ENCODE measurements at regions of chr10 and their contacts with region 1.

Region 1: DNA sequence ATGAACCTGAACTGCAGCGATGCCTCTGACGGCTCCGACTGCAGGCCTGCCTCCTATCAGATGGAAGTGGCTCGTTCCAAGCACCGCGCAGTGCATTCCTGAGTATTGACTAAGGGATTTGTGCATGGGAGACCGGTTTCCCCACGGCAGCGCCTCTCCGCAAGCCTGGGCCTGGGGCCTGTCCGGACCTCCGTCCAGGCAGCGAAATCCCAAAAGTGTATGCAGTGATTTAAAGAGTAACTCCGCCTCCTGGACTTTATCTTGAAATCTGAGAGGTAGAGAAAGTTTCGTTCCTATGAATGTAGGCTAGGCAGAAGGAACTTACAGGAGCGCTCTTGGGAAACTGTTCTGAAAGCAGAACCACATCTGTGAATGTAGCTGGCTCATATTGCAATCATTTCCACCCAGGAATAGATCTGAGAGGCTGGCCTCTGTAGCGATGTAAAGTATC is 106.2 kb upstream of the CELF2 start:
- DNase-seq: peak; percentile 82 to 88
- ATAC-seq: peak; percentile 86 to 91 (median 88)
- H3K4me3 ChIP-seq: peak overlapping the region; percentile 59
- H3K27ac ChIP-seq: peak overlapping the region; percentile 92
- H3K4me1 ChIP-seq: peaks cover 30% of the 10 kb centered on the region
- H3K27me3 ChIP-seq: no peaks in the 10 kb centered on the region
- CTCF ChIP-seq: no peak

Region 2: DNA sequence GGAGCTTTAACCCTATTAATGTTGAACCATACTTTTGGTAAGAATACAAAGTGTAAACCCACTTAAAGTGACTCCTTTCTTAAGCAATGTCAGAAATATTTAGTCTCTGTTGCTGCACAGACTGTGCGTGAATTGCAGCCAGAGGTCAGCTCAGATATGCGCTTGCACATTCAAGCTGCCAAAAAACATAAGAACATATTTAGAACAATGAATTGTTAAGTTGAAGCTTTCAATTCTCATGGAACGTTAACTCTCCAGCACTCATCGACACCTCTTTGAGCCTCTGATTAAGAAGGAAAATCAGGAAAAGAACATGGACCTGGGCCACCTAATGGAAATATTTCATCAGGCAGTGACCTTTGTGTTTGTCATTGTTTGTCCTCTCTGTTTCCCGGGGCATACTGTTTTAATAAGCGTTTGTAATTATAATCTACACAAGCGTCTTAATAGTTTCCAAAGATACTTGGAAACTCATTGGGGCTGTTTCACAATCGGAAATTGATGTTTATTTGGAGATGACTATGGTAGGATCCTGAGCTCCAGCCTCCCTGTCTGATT is 86.8 kb before region 1 on chr10:
- intact Hi-C with region 1: no loop called
- DNase-seq: peak; percentile 24 to 51
- ATAC-seq: peak in 3 of 4 donors; percentile 30 to 67 (median 65)
- H3K4me3 ChIP-seq: no peak overlapping the region
- H3K27ac ChIP-seq: peak overlapping the region; percentile 44
- H3K4me1 ChIP-seq: no peaks in the 10 kb centered on the region
- H3K27me3 ChIP-seq: no peaks in the 10 kb centered on the region
- CTCF ChIP-seq: no peak

Region 3: DNA sequence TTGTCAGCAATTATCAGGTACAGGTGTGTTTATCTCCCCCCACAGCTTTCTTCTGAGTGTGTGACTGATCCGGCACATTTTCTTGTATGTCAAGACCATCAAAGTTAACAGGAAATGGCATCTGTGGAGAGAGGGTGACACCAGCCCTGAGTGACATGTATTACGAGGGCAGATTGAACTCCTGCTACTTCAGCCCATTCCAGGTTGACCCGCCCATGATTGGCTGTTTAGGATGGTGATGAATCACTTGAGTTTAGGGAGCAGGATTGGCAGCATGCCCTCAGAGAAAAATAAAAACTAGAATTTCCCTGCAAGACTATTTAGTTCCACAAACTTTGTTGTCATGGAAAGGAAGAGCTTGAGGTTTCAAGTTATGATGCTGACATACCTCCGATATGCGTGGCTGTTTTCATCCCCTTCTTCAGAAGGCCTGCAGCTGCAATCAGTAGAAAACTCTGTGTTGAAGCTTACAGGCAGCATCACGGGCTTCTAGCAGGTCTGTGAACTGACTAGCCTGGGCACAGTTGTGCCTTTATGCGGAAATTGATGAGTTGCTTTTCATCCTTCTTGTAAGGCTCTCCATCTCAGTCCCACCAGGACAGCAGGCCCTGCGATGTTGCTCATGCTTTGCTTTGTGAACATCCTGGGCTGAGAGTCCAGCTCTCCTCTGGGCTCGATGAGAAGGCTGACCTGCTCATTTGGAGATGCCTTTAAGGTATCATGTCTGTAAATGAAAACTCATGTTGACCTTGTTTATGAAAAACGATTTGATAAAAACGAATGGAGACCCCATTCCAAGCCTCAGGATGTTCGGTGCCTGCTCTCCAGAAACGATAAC is 98.2 kb after region 1 on chr10:
- intact Hi-C with region 1: loop called in 1 of 2 experiments (anchors 5 kb)
- DNase-seq: no peak
- ATAC-seq: no peak
- H3K4me3 ChIP-seq: no peak overlapping the region
- H3K27ac ChIP-seq: peak overlapping the region; percentile 82
- H3K4me1 ChIP-seq: peaks cover 31% of the 10 kb centered on the region
- H3K27me3 ChIP-seq: peaks cover 0 to 7% (median 0%) of the 10 kb centered on the region in 3 donors
- CTCF ChIP-seq: no peak

Region 4: GRCh38 chr10:11017570-11018431 is 106.3 kb after region 1 on chr10 and contains the start of gene CELF2:
- intact Hi-C with region 1: loop called (anchors 5 kb)
- DNase-seq: peak; percentile 75 to 91
- ATAC-seq: peak; percentile 87 to 90 (median 89)
- H3K4me3 ChIP-seq: peak within 1 kb of the TSS; percentile 79
- H3K27ac ChIP-seq: peak within 1 kb of the TSS; percentile 95
- H3K4me1 ChIP-seq: peaks cover 44% of the 10 kb centered on the region
- H3K27me3 ChIP-seq: peaks cover 0 to 2% (median 0%) of the 10 kb centered on the region in 3 donors
- CTCF ChIP-seq: no peak
- total RNA-seq, gene CELF2: 29.0 to 47.8 (median 35.9) TPM

Region 5: DNA sequence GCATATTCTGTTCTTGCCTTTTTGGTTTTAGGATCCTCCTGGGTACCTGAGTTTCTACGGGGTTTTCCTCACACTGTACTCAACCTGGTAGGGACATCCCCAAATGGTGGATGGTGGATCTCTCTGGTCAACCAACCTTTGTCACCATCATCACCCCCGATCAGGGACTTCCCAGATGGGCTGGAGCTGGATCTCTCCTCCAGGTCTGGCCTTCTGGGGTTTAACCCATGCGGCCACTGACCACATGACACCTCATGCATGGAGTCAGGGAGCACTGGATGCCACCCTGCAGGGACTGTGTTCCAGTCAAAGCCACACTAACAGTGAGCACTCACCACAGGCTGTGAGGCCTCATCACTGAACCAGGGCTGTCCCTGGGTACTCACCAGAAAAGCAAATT is 186.2 kb after region 1 on chr10:
- intact Hi-C with region 1: no loop called
- DNase-seq: no peak
- ATAC-seq: peak in 1 of 4 donors; percentile 28
- H3K4me3 ChIP-seq: no peak overlapping the region
- H3K27ac ChIP-seq: no peak overlapping the region
- H3K4me1 ChIP-seq: peaks cover 20% of the 10 kb centered on the region
- H3K27me3 ChIP-seq: no peaks in the 10 kb centered on the region
- CTCF ChIP-seq: no peak

Measured in psoas muscle (tissue), 8 donors.